Psoas muscle (tissue), 8 donors: ENCODE measurements at regions of chr13 and their contacts with region 1.

Region 1: GRCh38 chr13:110615322-110616102 is at the start of gene NAXD:
- DNase-seq: peak; percentile 96 to 97
- ATAC-seq: peak; percentile 92 to 93 (median 93)
- H3K4me3 ChIP-seq: peak within 1 kb of the TSS; percentile 100
- H3K27ac ChIP-seq: peak within 1 kb of the TSS; percentile 96
- H3K4me1 ChIP-seq: peaks cover 34% of the 10 kb centered on the region
- H3K27me3 ChIP-seq: peaks cover 0 to 13% (median 0%) of the 10 kb centered on the region in 3 donors
- CTCF ChIP-seq: no peak
- total RNA-seq, gene NAXD: 29.2 to 59.2 (median 29.7) TPM

Region 2: GRCh38 chr13:110702591-110703526 is 87.3 kb after region 1 on chr13:
- intact Hi-C with region 1: loop called in 1 of 2 experiments (anchors 5 kb)
- DNase-seq: peak; percentile 39 to 82
- ATAC-seq: peak; percentile 54 to 74 (median 58)
- H3K4me3 ChIP-seq: peak overlapping the region; percentile 30
- H3K27ac ChIP-seq: peak overlapping the region; percentile 88
- H3K4me1 ChIP-seq: peaks cover 53% of the 10 kb centered on the region
- H3K27me3 ChIP-seq: no peaks in the 10 kb centered on the region
- CTCF ChIP-seq: no peak